Gastrocnemius medialis (tissue), 4 donors: ENCODE measurements at regions of chrX and their contacts with region 1.

Region 1: DNA sequence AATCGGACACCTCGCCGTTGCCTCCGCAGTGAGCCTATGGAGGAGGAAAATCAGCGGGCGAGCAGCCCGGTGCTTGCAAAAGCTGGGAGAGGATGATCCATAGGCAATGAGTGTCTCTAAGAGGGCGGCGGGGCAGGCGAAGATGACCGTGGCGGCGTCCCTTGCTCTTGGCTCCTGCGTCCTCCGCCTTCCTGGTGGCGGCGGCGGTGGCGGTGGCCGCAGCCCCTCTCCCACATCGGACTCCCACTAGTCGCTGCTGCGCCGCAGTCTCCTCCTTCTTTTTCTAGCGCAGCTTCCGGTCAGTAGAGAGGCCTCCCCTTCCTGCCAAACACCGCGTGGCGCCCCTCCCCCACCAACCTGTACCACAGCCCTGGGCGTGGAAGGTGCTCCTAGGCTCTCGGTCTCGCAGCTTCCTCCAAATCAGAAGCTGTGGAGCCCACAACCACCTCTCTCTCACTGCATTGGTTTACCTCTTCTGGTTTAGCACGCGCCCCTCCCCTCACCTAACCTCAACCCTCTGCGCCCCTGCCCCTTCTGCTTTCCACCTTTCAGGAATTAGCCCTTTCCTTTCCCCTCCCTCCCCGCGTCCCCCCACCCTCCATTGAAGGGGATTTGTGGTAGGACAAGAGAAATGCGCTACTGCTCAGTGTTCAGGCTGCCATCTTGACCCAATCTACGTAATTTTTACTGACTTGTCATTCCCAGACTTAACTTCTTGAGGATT is at the start of gene SPIN3:
- DNase-seq: peak; percentile 56 to 72
- ATAC-seq: peak; percentile 93 to 94
- H3K4me3 ChIP-seq: peak within 1 kb of the TSS; percentile 65 to 73 (median 69)
- H3K27ac ChIP-seq: peak within 1 kb of the TSS; percentile 69 to 78 (median 72)
- H3K4me1 ChIP-seq: peaks cover 3 to 7% of the 10 kb centered on the region in 2 donors
- H3K27me3 ChIP-seq: peaks cover 0 to 2% (median 0%) of the 10 kb centered on the region in 3 donors
- CTCF ChIP-seq: no peak
- POLR2A ChIP-seq: peak; percentile 25 to 28
- total RNA-seq, gene SPIN3: 0.85 to 7.4 (median 1.8) TPM

Region 2: GRCh38 chrX:55794405-55794804 is 1201.0 kb before region 1 on chrX:
- in situ Hi-C with region 1: no loop called
- intact Hi-C with region 1: no loop called
- DNase-seq: no peak
- ATAC-seq: no peak
- H3K4me3 ChIP-seq: no peak overlapping the region
- H3K27ac ChIP-seq: no peak overlapping the region
- H3K4me1 ChIP-seq: no peaks in the 10 kb centered on the region
- H3K27me3 ChIP-seq: no peaks in the 10 kb centered on the region
- CTCF ChIP-seq: no peak
- POLR2A ChIP-seq: no peak

Region 3: DNA sequence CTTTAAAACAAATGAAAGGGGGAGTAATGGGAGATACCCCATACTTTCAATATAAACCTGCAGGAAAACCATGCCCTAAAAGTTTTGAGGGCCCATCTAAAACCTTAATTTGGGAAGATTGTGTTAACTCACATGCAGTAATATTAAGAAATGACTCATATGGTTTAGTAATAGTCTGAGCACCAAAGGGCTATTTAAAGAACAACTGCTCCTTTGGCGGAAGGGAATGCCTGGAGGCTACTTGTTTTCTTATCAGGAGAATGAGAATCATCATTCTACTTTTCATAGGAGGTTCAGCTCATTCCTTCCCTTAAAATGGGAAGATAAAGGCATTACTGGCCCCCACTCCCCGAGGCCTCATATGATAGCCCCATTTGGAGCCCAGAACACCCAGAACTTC is 47.7 kb before region 1 on chrX:
- in situ Hi-C with region 1: no loop called
- intact Hi-C with region 1: loop called (anchors 2 kb)
- DNase-seq: peak; percentile 2 to 15
- ATAC-seq: peak in 1 of 2 donors; percentile 74
- H3K4me3 ChIP-seq: no peak overlapping the region
- H3K27ac ChIP-seq: peak overlapping the region; percentile 38 to 77 (median 64)
- H3K4me1 ChIP-seq: peaks cover 2 to 13% of the 10 kb centered on the region in 2 donors
- H3K27me3 ChIP-seq: peaks cover 0 to 4% (median 0%) of the 10 kb centered on the region in 3 donors
- CTCF ChIP-seq: no peak
- POLR2A ChIP-seq: no peak

Region 4: GRCh38 chrX:57583477-57583876 is 588.0 kb after region 1 on chrX:
- in situ Hi-C with region 1: no loop called
- intact Hi-C with region 1: no loop called
- DNase-seq: no peak
- ATAC-seq: no peak
- H3K4me3 ChIP-seq: no peak overlapping the region
- H3K27ac ChIP-seq: no peak overlapping the region
- H3K4me1 ChIP-seq: no peaks in the 10 kb centered on the region
- H3K27me3 ChIP-seq: no peaks in the 10 kb centered on the region
- CTCF ChIP-seq: no peak
- POLR2A ChIP-seq: no peak